Left ventricle myocardium superior (tissue), 1 donor: ENCODE measurements at regions of chr18 and their contacts with region 1.

Region 1: DNA sequence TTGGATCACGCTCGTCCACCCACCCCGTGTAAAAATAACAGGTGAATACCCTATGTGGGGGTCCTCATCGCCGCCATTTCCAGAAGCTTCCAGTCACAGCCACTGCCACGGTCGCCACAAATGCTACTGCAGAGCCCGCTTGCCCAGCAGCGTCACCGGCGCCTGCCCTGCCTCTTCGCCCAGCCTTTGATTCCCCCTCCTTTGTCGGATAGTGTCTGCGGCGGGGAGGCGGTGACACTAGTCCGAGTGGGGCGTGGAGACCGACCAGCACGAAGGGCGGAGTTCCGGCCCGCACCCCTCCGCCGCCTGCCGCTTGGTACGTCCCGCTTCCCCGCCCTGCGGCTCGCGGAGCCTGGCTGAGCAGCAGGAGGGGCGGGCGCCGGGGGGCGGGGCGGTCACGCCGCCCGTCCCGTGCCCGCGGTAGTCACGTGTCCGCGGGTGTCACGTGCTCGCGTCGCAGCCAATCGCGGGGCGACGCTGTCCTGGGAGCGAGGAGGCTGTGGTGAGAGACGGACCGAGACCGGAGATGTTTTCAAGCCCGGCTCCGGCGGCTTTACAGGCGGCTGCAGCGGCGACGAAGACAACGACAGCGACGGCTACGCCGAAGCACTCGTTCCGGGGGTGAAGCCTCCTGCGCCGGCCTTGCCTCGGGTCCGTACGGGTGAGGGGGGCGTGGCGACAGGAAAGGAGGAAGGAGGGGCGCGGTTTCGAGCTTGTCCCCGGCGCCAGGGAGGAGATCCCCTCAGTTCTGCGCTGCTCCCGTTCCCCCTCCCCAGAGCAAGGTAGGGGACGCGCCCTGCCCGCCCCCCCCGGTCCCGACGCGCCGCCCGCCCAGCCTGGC is at the start of gene ANKRD12:
- DNase-seq: peak; percentile 99
- ATAC-seq: peak; percentile 95
- total RNA-seq, gene ANKRD12: 46.1 TPM

Region 2: DNA sequence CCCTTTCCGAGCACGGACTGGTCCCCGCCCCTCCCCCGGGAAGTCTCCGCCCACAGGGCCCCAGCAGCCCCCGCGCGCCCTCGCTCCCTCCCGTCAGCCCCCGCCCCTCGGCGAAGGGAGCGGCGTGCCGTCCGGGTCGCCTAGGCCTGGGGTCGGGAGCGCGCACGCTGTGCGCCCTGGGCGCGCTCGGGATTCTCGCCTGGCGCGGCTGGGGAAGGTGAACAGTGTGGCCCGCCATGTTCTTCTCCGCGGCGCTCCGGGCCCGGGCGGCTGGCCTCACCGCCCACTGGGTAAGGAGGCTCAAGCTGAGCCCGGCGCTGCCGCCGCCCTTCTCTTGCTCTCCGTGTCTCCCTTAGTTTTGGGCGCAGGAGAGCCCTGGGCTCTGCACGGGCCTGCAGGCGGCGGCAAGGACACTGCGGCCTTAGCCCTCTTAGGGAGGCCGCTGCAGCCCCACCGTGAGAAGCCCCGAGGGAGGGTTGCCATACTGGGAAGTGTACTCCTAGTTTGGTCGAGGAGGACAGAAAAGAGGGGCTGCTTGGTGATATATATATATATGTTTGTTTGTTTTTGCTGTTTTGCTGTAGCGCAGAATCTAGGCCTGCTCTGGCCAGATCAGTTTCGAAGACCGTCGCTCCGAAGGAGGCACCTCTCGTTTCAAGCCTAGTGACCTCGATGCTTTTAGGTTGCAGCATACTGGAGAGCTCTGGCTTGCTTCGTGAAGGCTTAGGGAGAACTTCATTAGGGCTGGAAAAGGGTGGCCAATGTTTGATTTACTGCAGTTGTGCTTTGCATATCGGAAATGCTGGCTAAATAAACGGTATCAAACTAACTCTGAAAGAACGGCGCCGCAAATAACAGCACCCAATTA is 33.8 kb before region 1 on chr18 and contains the start of gene NDUFV2:
- intact Hi-C with region 1: loop called (anchors 5 kb)
- DNase-seq: peak; percentile 99
- ATAC-seq: peak; percentile 98
- total RNA-seq, gene NDUFV2: 496 TPM

Region 3: DNA sequence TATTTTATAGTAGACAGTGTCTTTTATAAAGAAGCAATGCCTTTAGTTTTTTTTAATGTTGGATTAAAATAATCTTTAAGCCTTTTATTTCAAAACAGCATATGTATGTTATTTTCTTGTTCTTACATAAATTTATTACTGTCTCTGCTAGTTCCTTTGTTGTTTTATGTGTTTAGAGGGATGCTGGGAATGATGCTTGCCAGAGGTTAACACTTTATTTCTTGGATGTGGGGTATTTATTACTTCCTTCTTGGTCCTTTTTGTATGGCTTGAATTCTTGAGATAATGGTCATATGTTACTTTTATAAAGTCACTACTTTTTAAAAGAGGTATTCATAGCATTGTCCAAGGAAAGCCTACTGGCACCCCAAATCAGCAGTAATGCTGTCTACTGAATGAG is 63.1 kb after region 1 on chr18:
- intact Hi-C with region 1: no loop called
- DNase-seq: no peak
- ATAC-seq: no peak